HepG2 (cell line): ENCODE measurements at regions of chr12 and their contacts with region 1.

Region 1: GRCh38 chr12:11581179-11581755 is 68.2 kb upstream of the ETV6 start:
- DNase-seq: peak; percentile 50
- ATAC-seq: no peak
- H3K4me3 ChIP-seq: no peak overlapping the region
- H3K27ac ChIP-seq: no peak overlapping the region
- H3K4me1 ChIP-seq: no peaks in the 10 kb centered on the region
- H3K27me3 ChIP-seq: no peaks in the 10 kb centered on the region; a peak in 1 of 5 replicates
- CTCF ChIP-seq: peak; percentile 59
- EP300 ChIP-seq: no peak
- POLR2A ChIP-seq: no peak
- RAD21 ChIP-seq: peak; percentile 63

Region 2: DNA sequence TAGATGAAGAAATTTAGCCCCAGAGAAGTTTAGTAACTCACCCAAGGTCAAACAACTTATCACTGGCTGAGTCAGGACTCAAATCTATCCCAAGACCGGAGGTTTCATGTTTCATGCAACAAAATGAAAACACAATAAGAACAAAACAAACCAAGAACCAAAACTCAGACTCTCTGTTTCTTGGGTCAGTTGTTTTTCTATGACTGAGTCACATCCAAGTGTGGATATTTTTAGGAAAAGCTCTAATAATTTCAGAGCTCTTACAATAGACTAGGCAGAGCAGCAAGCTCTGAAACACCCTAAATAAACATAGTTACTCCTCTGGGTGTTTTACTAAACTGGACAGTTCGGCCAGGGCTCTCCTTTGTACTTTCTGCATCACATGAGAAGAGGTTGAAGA is 98.3 kb before region 1 on chr12:
- CTCF ChIA-PET with region 1: no interaction called
- POLR2A ChIA-PET with region 1: no interaction called
- in situ Hi-C with region 1: no loop called
- intact Hi-C with region 1: no loop called
- DNase-seq: no peak
- ATAC-seq: no peak
- H3K4me3 ChIP-seq: no peak overlapping the region
- H3K27ac ChIP-seq: no peak overlapping the region
- H3K4me1 ChIP-seq: peaks cover 6% of the 10 kb centered on the region; the same call in 1 of the 2 replicates
- H3K27me3 ChIP-seq: peaks cover 0 to 6% of the 10 kb centered on the region in 2 experiments; a peak in 2 of 5 replicates
- CTCF ChIP-seq: no peak
- EP300 ChIP-seq: no peak
- POLR2A ChIP-seq: no peak
- RAD21 ChIP-seq: no peak

Region 3: DNA sequence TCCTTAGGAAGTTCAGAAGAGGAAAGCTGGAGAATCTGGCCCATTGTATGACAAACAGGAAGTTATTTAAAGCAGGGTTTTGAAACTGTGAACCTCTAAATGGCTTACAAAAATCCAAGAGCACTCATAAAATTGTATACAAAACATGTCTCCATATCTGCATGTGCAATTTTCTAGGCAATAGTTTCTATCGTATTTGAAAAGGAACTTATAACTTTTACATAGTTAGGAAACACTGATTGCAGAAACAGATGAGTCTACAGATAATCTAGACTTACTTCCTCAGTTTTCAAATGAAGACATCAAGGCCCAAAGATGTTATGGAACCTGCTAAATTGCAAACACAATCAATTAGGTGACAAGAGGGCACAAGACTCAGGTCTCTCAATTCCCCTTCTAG is 14.9 kb after region 1 on chr12:
- CTCF ChIA-PET with region 1: no interaction called
- POLR2A ChIA-PET with region 1: no interaction called
- in situ Hi-C with region 1: no loop called
- intact Hi-C with region 1: no loop called
- DNase-seq: no peak
- ATAC-seq: no peak
- H3K4me3 ChIP-seq: no peak overlapping the region
- H3K27ac ChIP-seq: no peak overlapping the region
- H3K4me1 ChIP-seq: no peaks in the 10 kb centered on the region
- H3K27me3 ChIP-seq: peaks cover 3 to 8% of the 10 kb centered on the region in 2 experiments; a peak in 3 of 5 replicates
- CTCF ChIP-seq: no peak
- EP300 ChIP-seq: no peak
- POLR2A ChIP-seq: no peak
- RAD21 ChIP-seq: no peak

Region 4: GRCh38 chr12:11765817-11766794 is 184.8 kb after region 1 on chr12:
- CTCF ChIA-PET with region 1: no interaction called
- POLR2A ChIA-PET with region 1: no interaction called
- in situ Hi-C with region 1: no loop called
- intact Hi-C with region 1: no loop called
- DNase-seq: no peak
- ATAC-seq: no peak
- H3K4me3 ChIP-seq: no peak overlapping the region
- H3K27ac ChIP-seq: no peak overlapping the region
- H3K4me1 ChIP-seq: peaks cover 35% of the 10 kb centered on the region
- H3K27me3 ChIP-seq: no peaks in the 10 kb centered on the region
- CTCF ChIP-seq: no peak
- EP300 ChIP-seq: no peak
- POLR2A ChIP-seq: no peak
- RAD21 ChIP-seq: no peak

Region 5: DNA sequence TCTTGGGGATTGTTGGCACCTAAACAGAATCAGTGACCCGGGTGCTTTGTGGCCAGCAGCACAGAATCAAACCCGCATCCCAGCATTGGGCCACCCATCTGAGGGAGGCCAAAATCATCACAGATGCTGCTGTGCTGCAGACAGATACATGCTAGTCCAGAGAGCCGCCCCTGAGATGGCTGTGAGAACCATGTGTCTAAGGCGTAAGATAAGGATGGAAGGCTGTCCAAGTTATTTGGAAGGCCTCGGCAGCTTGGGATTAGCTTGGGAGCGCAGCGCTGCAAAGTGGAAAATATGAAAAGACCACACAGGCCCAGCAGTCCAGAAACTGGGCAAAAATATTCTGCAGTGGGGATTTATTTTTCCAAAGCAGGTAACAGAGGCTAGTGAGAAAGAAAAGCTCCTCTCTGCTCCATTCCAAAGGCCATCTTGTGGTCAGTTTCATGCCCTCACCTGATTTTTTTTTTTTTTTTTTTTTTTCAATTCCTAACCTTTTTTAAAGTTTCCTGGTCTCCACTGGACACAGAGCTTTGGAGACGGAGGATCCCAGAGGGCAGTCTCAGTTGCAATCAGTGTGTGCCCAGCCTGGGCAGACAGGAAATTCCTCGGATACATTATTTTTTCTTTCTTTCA is 310.6 kb after region 1 on chr12:
- CTCF ChIA-PET with region 1: interaction called, 5 read pairs
- POLR2A ChIA-PET with region 1: no interaction called
- in situ Hi-C with region 1: no loop called
- intact Hi-C with region 1: loop called (anchors 5 kb)
- DNase-seq: peak; percentile 34
- ATAC-seq: peak; percentile 66
- H3K4me3 ChIP-seq: no peak overlapping the region
- H3K27ac ChIP-seq: no peak overlapping the region
- H3K4me1 ChIP-seq: peaks cover 17% of the 10 kb centered on the region
- H3K27me3 ChIP-seq: no peaks in the 10 kb centered on the region
- CTCF ChIP-seq: no peak; the same call in 1 of the 2 replicates
- EP300 ChIP-seq: no peak
- POLR2A ChIP-seq: no peak
- RAD21 ChIP-seq: peak; percentile 41; the same call in 1 of the 2 replicates

Region 6: GRCh38 chr12:12017798-12018197 is 436.5 kb after region 1 on chr12:
- CTCF ChIA-PET with region 1: no interaction called
- POLR2A ChIA-PET with region 1: no interaction called
- in situ Hi-C with region 1: no loop called
- intact Hi-C with region 1: loop called (anchors 5 kb)
- DNase-seq: no peak
- ATAC-seq: no peak
- H3K4me3 ChIP-seq: no peak overlapping the region
- H3K27ac ChIP-seq: no peak overlapping the region
- H3K4me1 ChIP-seq: no peaks in the 10 kb centered on the region
- H3K27me3 ChIP-seq: peaks cover 4 to 43% of the 10 kb centered on the region in 2 experiments; a peak in 4 of 5 replicates
- CTCF ChIP-seq: peak; percentile 57
- EP300 ChIP-seq: no peak
- POLR2A ChIP-seq: no peak
- RAD21 ChIP-seq: no peak

Region 7: DNA sequence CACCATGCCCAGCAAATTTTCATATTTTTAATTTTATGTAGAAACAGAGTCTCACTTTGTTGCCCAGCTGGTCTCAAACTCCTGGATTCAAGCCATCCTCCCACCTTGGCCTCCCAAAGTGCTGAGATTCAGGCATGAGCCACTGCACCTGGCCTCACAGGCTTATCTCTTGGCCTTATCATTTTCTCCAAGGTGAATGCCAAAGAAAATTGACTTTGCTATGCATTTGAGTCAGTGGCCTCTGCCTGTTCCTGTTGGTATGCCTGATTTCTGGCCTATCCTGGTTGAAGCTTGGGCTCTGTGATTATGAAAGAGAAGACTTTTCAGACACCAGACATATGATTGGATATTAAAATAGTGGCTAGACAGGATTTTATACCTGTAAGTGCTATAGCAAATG is 734.6 kb after region 1 on chr12:
- CTCF ChIA-PET with region 1: no interaction called
- POLR2A ChIA-PET with region 1: no interaction called
- in situ Hi-C with region 1: no loop called
- intact Hi-C with region 1: no loop called
- DNase-seq: no peak
- ATAC-seq: no peak
- H3K4me3 ChIP-seq: no peak overlapping the region
- H3K27ac ChIP-seq: peak overlapping the region; percentile 13
- H3K4me1 ChIP-seq: peaks cover 71% of the 10 kb centered on the region
- H3K27me3 ChIP-seq: no peaks in the 10 kb centered on the region
- CTCF ChIP-seq: no peak
- EP300 ChIP-seq: no peak
- POLR2A ChIP-seq: no peak
- RAD21 ChIP-seq: no peak

Region 8: GRCh38 chr12:12704593-12705230 is 1123.4 kb after region 1 on chr12:
- CTCF ChIA-PET with region 1: no interaction called
- POLR2A ChIA-PET with region 1: no interaction called
- in situ Hi-C with region 1: no loop called
- intact Hi-C with region 1: loop called (anchors 10 kb)
- DNase-seq: peak; percentile 92
- ATAC-seq: peak; percentile 99
- H3K4me3 ChIP-seq: peak overlapping the region in 1 of 3 experiments; percentile 6; a peak in 1 of 6 replicates
- H3K27ac ChIP-seq: no peak overlapping the region
- H3K4me1 ChIP-seq: peaks cover 25% of the 10 kb centered on the region
- H3K27me3 ChIP-seq: no peaks in the 10 kb centered on the region; a peak in 1 of 5 replicates
- CTCF ChIP-seq: peak; percentile 92
- EP300 ChIP-seq: no peak; a peak in 1 of 4 replicates
- POLR2A ChIP-seq: no peak
- RAD21 ChIP-seq: peak; percentile 98